MCF 10A (cell line): ENCODE measurements at regions of chr1 and their contacts with region 1.

Region 1: DNA sequence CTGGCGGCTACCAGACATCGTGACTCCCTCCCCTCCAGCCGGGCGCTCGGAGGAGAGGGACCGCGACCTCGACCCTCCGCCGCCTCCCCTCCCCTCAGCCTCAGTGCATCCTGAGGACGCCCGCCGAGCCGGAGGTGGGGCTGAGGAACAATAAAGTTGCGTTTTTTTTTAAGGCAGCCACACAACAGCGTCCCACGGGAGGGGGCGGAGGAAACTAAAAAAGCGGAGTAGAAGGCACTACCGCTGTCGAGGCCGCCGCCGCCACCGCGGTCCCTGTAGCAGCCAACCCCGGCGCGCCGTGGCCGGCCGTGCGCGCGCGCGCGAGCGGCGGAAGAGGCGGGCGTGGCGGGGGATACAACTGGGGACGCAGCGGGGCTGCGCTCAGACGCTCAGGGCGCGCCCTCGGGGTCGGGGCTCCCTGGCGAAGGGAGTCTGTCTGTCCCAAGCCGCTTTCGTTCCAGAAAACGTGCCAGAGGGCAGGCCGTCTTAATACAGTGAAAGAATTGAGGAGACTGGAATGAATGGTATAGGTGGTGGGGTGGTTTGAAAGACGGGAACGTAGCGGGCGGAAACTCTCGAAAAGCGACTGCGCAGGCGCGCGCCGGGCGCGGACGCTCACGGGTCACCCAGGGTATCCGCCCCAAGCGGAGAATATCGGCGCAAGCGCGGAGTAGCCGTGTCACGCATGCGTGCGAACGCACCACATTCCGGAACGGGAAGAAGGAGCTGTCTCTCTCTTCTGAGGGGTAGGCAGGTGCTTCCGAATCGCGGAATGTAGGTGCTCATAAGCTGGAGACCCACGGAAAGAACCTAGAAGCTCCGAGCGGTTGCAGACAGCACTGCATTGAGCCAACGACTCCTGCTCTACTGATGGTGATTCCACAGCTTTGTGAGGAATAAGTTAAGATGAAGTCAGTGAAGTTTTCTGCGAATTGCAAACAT is at the start of gene COP1:
- DNase-seq: peak; percentile 98
- H3K4me3 Mint-ChIP-seq: peak within 1 kb of the TSS; percentile 83
- H3K27ac Mint-ChIP-seq: peak within 1 kb of the TSS; percentile 57
- H3K4me1 Mint-ChIP-seq: peaks cover 23% of the 10 kb centered on the region
- H3K27me3 Mint-ChIP-seq: no peaks in the 10 kb centered on the region
- CTCF ChIP-seq: no peak
- total RNA-seq, gene COP1: 41.6 and 47.0 TPM in 2 replicates

Region 2: DNA sequence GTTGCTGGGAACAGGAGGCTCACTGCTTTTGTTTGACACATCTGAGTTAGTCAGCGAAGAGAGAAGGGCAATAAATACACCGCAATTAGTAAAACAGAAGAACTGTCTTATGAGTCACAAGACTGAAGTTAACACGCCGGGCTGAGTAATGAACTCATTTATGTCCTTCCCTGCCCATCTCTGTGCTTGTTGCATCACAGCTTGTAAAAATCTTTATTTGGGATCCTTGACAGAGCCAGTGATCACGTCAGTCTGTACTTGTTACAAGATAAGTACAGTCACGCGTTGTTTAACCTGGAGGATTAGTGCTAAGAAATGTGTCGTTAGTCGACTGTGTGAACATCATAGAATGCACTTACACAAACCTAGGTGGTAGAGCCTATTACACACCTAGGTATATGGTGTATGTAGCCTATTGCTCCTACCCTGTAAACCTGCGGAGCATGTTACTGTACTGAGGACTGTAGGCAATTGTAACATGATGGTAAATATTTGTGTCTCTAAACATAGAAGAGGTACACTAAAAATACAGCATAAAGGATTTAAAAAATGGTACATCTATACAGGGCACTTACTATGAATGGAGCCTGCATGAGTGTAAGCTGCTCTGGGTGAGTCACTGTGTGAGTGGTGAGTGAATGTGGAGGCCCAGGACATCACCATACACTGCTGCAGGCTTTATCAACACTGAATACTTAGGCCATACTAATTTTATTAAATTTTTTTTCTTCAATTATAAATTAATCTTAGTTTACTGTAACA is 736.0 kb before region 1 on chr1:
- CTCF ChIA-PET with region 1: no interaction called
- POLR2A ChIA-PET with region 1: interaction called, 3 read pairs
- intact Hi-C with region 1: loop called (anchors 10 kb)
- DNase-seq: peak; percentile 95
- H3K4me3 Mint-ChIP-seq: no peak overlapping the region
- H3K27ac Mint-ChIP-seq: peak overlapping the region; percentile 65
- H3K4me1 Mint-ChIP-seq: peaks cover 30% of the 10 kb centered on the region
- H3K27me3 Mint-ChIP-seq: peaks cover 72% of the 10 kb centered on the region
- CTCF ChIP-seq: no peak

Region 3: DNA sequence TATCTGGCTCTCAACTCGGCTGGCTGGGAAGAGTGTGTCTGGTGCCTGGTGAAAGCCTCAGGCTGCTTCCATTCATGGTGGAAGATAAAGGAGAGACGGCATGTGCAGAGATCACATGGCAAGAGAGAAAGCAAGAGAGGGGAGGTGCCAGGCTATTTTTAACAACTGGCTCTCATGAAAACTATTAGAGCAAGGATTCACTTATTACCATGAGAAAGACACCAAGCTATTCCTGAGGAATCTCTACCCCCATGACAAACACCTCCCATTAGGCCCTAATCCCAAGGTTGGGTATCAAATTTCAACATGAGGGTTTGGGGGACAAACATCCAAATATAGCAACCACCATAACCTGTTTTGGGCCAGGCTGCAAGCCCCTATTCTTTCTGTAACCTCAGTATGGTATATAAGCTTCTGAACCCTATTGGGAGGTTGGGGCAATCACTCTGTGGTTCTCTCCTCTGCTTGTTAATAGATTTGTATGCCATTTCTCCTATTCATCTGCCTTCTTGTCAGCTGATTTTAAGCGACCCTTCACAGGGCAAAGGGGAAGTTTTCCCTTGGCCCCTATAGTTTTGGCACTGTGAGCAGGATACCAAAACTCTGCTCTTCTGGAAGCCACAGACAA is 284.9 kb before region 1 on chr1:
- CTCF ChIA-PET with region 1: no interaction called
- POLR2A ChIA-PET with region 1: no interaction called
- intact Hi-C with region 1: no loop called
- DNase-seq: no peak
- H3K4me3 Mint-ChIP-seq: no peak overlapping the region
- H3K27ac Mint-ChIP-seq: no peak overlapping the region
- H3K4me1 Mint-ChIP-seq: no peaks in the 10 kb centered on the region
- H3K27me3 Mint-ChIP-seq: no peaks in the 10 kb centered on the region
- CTCF ChIP-seq: no peak

Region 4: GRCh38 chr1:176058686-176059085 is 148.5 kb before region 1 on chr1:
- CTCF ChIA-PET with region 1: no interaction called
- POLR2A ChIA-PET with region 1: no interaction called
- intact Hi-C with region 1: no loop called
- DNase-seq: no peak
- H3K4me3 Mint-ChIP-seq: no peak overlapping the region
- H3K27ac Mint-ChIP-seq: no peak overlapping the region
- H3K4me1 Mint-ChIP-seq: no peaks in the 10 kb centered on the region
- H3K27me3 Mint-ChIP-seq: no peaks in the 10 kb centered on the region
- CTCF ChIP-seq: no peak

Region 5: GRCh38 chr1:176119549-176119948 is 87.7 kb before region 1 on chr1:
- CTCF ChIA-PET with region 1: interaction called, 10 read pairs
- POLR2A ChIA-PET with region 1: no interaction called
- intact Hi-C with region 1: loop called (anchors 5 kb)
- DNase-seq: peak; percentile 47
- H3K4me3 Mint-ChIP-seq: no peak overlapping the region
- H3K27ac Mint-ChIP-seq: no peak overlapping the region
- H3K4me1 Mint-ChIP-seq: peaks cover 6% of the 10 kb centered on the region
- H3K27me3 Mint-ChIP-seq: no peaks in the 10 kb centered on the region
- CTCF ChIP-seq: peak; percentile 36

Region 6: DNA sequence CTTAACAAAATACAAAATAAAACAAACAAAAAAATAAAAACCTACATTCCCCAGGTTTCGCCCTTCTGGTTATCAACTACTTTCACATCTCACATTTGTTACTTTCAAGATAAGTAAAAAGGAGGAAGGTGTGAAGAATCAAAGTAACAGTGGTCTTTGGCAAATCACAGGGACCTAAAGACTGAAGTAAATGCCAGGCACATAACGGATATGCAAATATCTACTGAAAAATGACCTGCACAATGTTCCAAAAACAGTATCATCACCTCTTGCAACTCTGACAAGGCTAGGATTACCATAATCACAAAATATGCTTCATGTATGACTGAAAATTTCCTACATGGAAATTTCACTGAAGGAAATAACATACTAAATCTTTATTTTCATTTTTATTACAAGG is 29.5 kb before region 1 on chr1:
- CTCF ChIA-PET with region 1: no interaction called
- POLR2A ChIA-PET with region 1: no interaction called
- intact Hi-C with region 1: no loop called
- DNase-seq: no peak
- H3K4me3 Mint-ChIP-seq: no peak overlapping the region
- H3K27ac Mint-ChIP-seq: no peak overlapping the region
- H3K4me1 Mint-ChIP-seq: peaks cover 12% of the 10 kb centered on the region
- H3K27me3 Mint-ChIP-seq: no peaks in the 10 kb centered on the region
- CTCF ChIP-seq: no peak

Region 7: GRCh38 chr1:176196728-176197127 is 10.5 kb before region 1 on chr1:
- CTCF ChIA-PET with region 1: interaction called, 4 read pairs
- POLR2A ChIA-PET with region 1: interaction called, 13 read pairs
- intact Hi-C with region 1: no loop called
- DNase-seq: no peak
- H3K4me3 Mint-ChIP-seq: no peak overlapping the region
- H3K27ac Mint-ChIP-seq: no peak overlapping the region
- H3K4me1 Mint-ChIP-seq: peaks cover 21% of the 10 kb centered on the region
- H3K27me3 Mint-ChIP-seq: no peaks in the 10 kb centered on the region
- CTCF ChIP-seq: no peak

Region 8: GRCh38 chr1:176220100-176220689 is 13.0 kb after region 1 on chr1:
- CTCF ChIA-PET with region 1: interaction called, 3 read pairs
- POLR2A ChIA-PET with region 1: interaction called, 14 read pairs
- intact Hi-C with region 1: no loop called
- DNase-seq: no peak
- H3K4me3 Mint-ChIP-seq: no peak overlapping the region
- H3K27ac Mint-ChIP-seq: no peak overlapping the region
- H3K4me1 Mint-ChIP-seq: no peaks in the 10 kb centered on the region
- H3K27me3 Mint-ChIP-seq: peaks cover 6% of the 10 kb centered on the region
- CTCF ChIP-seq: no peak

Region 9: GRCh38 chr1:176241385-176242015 is 34.3 kb after region 1 on chr1:
- CTCF ChIA-PET with region 1: no interaction called
- POLR2A ChIA-PET with region 1: interaction called, 13 read pairs
- intact Hi-C with region 1: loop called (anchors 2 kb)
- DNase-seq: peak; percentile 93
- H3K4me3 Mint-ChIP-seq: peak overlapping the region; percentile 2
- H3K27ac Mint-ChIP-seq: peak overlapping the region; percentile 64
- H3K4me1 Mint-ChIP-seq: peaks cover 10% of the 10 kb centered on the region
- H3K27me3 Mint-ChIP-seq: no peaks in the 10 kb centered on the region
- CTCF ChIP-seq: no peak

Region 10: GRCh38 chr1:176789571-176790090 is 582.4 kb after region 1 on chr1:
- CTCF ChIA-PET with region 1: no interaction called
- POLR2A ChIA-PET with region 1: no interaction called
- intact Hi-C with region 1: no loop called
- DNase-seq: peak; percentile 11
- H3K4me3 Mint-ChIP-seq: no peak overlapping the region
- H3K27ac Mint-ChIP-seq: no peak overlapping the region
- H3K4me1 Mint-ChIP-seq: peaks cover 10% of the 10 kb centered on the region
- H3K27me3 Mint-ChIP-seq: no peaks in the 10 kb centered on the region
- CTCF ChIP-seq: no peak